Posterior vena cava (tissue), 2 donors: ENCODE measurements at regions of chr1 and their contacts with region 1.

Region 1: DNA sequence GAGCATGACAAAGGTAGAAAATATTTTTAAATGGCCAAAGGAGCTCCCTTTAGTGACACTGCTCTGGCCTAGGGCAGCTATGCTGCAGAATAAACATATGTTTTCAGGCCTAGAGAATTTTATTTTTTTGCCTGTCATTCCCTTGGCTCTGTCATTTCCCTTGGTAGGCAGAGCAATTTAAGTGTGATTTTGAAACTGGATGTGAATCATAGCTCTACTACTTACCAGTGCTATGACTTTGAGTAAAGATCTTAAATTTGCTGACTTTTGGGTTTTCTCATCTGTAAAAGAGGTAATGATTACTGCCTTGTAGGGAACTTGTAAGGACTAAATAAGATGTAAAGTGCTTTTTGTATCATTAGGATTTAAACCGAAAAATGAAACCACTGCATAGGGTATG is 189.0 kb upstream of the ZRANB2 start:
- DNase-seq: no peak

Region 2: DNA sequence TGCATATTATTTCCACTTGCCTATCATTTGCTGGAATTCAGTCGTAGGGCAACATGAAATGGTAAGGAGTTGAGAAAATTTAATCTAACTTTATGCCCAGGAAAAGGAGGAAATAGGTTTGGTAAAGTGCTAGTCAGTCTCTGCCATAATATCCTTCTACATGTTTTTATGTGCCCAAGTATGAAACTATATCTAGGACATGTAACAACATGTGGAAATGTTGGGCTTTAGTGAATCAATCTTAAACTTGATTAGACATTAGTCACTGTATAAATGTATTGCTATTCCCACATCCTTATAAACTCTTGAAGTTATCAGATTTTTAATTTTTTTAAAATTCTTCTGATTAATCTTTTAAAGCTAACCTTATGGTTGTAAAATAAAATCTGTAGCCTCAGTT is 15.7 kb after region 1 on chr1:
- intact Hi-C with region 1: loop called in 1 of 2 experiments (anchors 1 kb)
- DNase-seq: no peak